Colonic mucosa (tissue), 4 donors: ENCODE measurements at regions of chr2 and their contacts with region 1.

Region 1: GRCh38 chr2:75464348-75464946 is 96.3 kb downstream of the EVA1A start:
- DNase-seq: no peak
- H3K4me3 ChIP-seq: no peak overlapping the region
- H3K27ac ChIP-seq: no peak overlapping the region
- H3K4me1 ChIP-seq: no peaks in the 10 kb centered on the region
- H3K27me3 ChIP-seq: no peaks in the 10 kb centered on the region
- CTCF ChIP-seq: peak; percentile 32

Region 2: DNA sequence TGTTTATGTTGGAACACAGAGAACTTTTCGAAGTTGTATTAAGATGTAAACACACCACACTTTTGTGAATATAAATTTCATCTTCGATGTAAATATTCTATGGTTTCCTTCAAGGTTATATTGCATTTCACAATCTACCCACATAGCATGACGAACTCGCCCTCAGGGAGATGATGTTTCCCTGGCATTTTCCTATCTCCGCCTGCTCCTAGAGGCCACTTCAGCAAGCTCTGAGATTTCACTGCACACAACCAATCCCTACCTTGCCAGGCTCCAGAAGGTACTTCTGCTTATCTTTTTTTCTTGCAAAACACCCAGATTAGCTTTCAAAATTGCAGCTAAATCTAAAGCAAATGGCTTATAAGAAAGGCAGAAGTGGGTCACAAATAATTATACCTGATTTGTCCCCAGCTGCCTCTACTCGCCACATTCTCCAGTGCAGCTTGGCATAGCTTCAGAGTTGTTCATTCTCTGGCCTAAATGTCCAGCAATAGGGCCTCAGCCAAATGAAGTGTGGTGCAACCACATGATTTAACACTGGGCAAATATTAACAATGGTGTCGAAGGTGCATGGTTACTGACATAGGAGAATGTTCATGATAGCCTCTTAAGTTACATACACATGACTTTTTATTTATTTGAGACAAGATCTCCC is 149.7 kb after region 1 on chr2:
- intact Hi-C with region 1: loop called (anchors 5 kb)
- DNase-seq: no peak
- H3K4me3 ChIP-seq: no peak overlapping the region
- H3K27ac ChIP-seq: no peak overlapping the region
- H3K4me1 ChIP-seq: no peaks in the 10 kb centered on the region
- H3K27me3 ChIP-seq: no peaks in the 10 kb centered on the region
- CTCF ChIP-seq: no peak